HEK293T (cell line): ENCODE measurements at regions of chr6 and their contacts with region 1.

Region 1: GRCh38 chr6:33147807-33148666 is 44.2 kb downstream of the COL11A2 start:
- DNase-seq: peak; percentile 47

Region 2: DNA sequence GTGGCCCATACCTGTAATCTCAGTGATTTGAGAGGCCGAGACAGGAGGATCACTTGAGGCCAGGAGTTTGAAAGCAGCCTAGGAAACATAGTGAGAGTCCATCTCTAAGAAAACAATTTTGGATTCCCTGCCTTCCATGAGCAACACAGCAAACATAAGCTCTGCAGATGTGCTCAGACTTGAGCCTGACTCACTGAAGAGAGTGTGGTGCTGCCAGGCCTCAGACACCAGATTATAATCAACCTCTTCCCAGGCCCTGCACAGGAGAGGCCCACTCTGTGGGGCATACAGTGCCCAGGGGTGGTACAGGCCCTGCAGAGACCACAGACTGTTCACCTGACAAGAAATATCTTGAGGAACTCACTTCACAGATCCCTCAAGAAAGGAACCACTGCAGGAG is 52.4 kb before region 1 on chr6:
- CTCF ChIA-PET with region 1: no interaction called
- POLR2A ChIA-PET with region 1: no interaction called
- DNase-seq: no peak

Region 3: GRCh38 chr6:33126101-33126714 is 21.8 kb before region 1 on chr6:
- CTCF ChIA-PET with region 1: interaction called, 16 read pairs
- POLR2A ChIA-PET with region 1: no interaction called
- DNase-seq: peak; percentile 66